Pancreas (tissue), 10 donors: ENCODE measurements at regions of chr13 and their contacts with region 1.

Region 1: GRCh38 chr13:113393563-113394338 is 29.8 kb upstream of the GRTP1 start:
- DNase-seq: peak; percentile 61 to 94 (median 83)
- ATAC-seq: peak; percentile 98 to 99 (median 99)
- H3K4me3 ChIP-seq: peak overlapping the region; percentile 63 to 85 (median 74)
- H3K27ac ChIP-seq: no peak overlapping the region
- H3K4me1 ChIP-seq: no peaks in the 10 kb centered on the region
- H3K27me3 ChIP-seq: no peaks in the 10 kb centered on the region
- CTCF ChIP-seq: peak; percentile 80 to 95 (median 88)

Region 2: GRCh38 chr13:113129921-113130750 is 263.6 kb before region 1 on chr13:
- intact Hi-C with region 1: no loop called
- DNase-seq: peak in 1 of 6 donors; percentile 64
- ATAC-seq: peak in 3 of 4 donors; percentile 34 to 72 (median 40)
- H3K4me3 ChIP-seq: peak overlapping the region in 3 of 4 donors; percentile 4 to 32 (median 21)
- H3K27ac ChIP-seq: no peak overlapping the region
- H3K4me1 ChIP-seq: no peaks in the 10 kb centered on the region
- H3K27me3 ChIP-seq: peaks cover 0 to 5% (median 0%) of the 10 kb centered on the region in 4 donors
- CTCF ChIP-seq: no peak

Region 3: DNA sequence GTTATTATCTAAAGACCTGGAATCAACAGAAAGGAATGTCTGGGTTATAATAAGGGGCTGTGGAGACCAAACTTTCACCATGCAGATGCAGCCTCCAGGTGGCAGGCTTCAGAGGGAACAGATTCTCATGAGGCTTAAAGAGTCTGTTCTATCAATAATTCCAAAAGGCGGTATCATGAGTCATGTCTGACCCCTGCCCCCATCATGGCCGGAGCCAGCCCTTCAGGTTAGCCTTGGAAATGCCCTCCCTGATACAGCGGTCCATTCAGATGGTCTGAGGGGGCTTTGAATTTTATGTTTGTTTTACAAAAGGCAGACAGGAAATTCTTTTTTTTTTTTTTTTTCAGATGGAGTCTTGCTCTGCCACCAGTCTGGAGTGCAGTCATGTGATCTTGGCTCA is 118.4 kb before region 1 on chr13:
- intact Hi-C with region 1: loop called in 2 of 3 experiments (anchors 5 to 10 kb)
- DNase-seq: peak in 3 of 6 donors; percentile 34 to 69 (median 42)
- ATAC-seq: peak; percentile 88 to 94 (median 91)
- H3K4me3 ChIP-seq: no peak overlapping the region
- H3K27ac ChIP-seq: no peak overlapping the region
- H3K4me1 ChIP-seq: no peaks in the 10 kb centered on the region
- H3K27me3 ChIP-seq: no peaks in the 10 kb centered on the region
- CTCF ChIP-seq: peak; percentile 17 to 52 (median 30)